ENCODE measurements at regions of chr6 and their contacts with region 1.

Region 1: GRCh38 chr6:100518579-100518978 is 53.9 kb upstream of the SIM1 start:
- DNase-seq: no peak
- H3K4me3 ChIP-seq: no peak overlapping the region
- H3K27ac ChIP-seq: no peak overlapping the region
- H3K4me1 ChIP-seq: no peaks in the 10 kb centered on the region
- H3K27me3 ChIP-seq: no peaks in the 10 kb centered on the region
- CTCF ChIP-seq: no peak
- POLR2A ChIP-seq: no peak

Region 2: DNA sequence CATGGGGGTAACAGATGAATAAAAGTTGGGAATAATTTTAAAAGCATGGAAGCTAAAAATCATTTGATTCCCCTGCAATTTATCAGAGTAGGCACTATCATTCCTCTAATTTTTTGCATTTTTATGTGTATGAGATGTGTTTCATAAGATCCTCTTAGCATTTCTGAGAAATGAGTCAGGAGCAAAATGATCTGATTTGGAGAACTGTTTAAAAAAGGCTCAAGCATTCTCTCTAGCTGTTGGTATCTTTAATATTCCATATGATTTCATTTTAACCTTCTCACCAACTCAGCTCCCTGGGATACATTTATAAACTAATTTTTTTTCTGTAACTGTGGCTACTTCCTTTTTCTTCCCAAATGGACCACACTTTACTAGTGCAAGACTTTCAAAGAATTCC is 585.5 kb before region 1 on chr6:
- intact Hi-C with region 1: loop called (anchors 5 kb)
- DNase-seq: no peak
- H3K4me3 ChIP-seq: no peak overlapping the region
- H3K27ac ChIP-seq: no peak overlapping the region
- H3K4me1 ChIP-seq: no peaks in the 10 kb centered on the region
- H3K27me3 ChIP-seq: no peaks in the 10 kb centered on the region
- CTCF ChIP-seq: no peak
- POLR2A ChIP-seq: no peak

Region 3: DNA sequence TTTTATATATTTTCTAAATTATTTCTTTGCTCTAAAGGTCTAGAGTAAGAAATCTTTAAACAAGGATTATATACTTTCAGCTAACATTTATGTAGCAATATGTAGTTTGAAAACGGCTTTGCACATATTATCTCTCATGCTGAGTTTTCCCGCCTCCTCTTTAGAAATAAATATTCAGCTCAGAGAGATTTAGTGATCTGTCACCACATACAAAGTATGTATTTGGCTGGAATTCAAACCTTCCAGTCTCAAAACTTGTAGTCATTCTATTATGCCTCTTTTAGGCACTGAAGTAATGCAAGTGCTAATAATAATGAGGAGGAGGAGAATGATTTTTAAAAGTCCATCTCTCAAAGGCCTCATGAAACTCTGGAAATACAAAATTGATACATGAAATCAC is 1399.9 kb after region 1 on chr6:
- intact Hi-C with region 1: no loop called
- DNase-seq: no peak
- H3K4me3 ChIP-seq: no peak overlapping the region
- H3K27ac ChIP-seq: no peak overlapping the region
- H3K4me1 ChIP-seq: no peaks in the 10 kb centered on the region
- H3K27me3 ChIP-seq: no peaks in the 10 kb centered on the region
- CTCF ChIP-seq: no peak
- POLR2A ChIP-seq: no peak

Measured in breast epithelium (tissue), 4 donors.